ENCODE measurements at regions of chr1 and their contacts with region 1.

Region 1: DNA sequence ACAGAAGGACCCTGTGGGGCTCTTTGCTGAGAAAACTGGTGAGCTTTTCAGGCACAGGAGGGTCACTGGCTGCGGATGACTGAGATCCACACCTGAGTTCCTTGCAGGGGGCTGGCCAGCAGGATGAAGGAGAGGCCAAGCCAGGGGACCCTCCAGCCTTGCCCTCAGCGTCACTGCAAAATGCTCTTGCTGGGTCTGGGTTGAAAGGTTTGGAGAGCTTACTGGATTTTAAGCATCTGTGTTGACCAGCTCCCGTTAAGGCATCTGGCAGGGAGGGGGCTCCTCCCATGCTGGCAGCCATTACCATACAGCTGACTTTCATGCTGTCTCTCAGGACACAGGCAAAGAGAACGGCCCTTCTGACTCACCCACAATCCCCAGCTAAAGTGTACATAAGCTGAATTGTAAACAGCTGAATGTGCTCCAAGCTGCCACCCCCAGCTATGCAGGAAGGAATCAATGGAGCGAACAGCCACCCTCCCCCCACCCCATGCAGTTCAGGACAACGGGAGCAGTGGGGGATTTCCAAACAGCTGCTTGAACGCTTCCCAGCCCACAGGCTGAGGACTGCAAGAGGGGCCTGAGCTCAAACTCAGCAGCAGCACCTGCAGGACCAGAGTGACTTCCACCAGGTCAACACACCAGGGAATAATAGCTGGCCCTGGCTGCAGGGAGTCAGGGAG is 21.3 kb upstream of the A3GALT2 start:
- DNase-seq: peak; percentile 48 to 77
- H3K4me3 ChIP-seq: peak overlapping the region in 3 of 4 experiments; percentile 4 to 33 (median 11); a peak in 4 of 8 replicates
- H3K27ac ChIP-seq: no peak overlapping the region; the same call in 1 of the 2 replicates
- H3K4me1 ChIP-seq: peaks cover 23 to 56% (median 31%) of the 10 kb centered on the region in 4 experiments
- H3K27me3 ChIP-seq: peaks cover 3 to 14% (median 10%) of the 10 kb centered on the region in 4 experiments
- CTCF ChIP-seq: no peak
- EP300 ChIP-seq: peak; percentile 2 to 88; a peak in 2 of 3 replicates
- POLR2A ChIP-seq: no peak; a peak in 1 of 3 replicates
- RAD21 ChIP-seq: peak; percentile 12 to 25; a peak in 1 of 4 replicates

Region 2: DNA sequence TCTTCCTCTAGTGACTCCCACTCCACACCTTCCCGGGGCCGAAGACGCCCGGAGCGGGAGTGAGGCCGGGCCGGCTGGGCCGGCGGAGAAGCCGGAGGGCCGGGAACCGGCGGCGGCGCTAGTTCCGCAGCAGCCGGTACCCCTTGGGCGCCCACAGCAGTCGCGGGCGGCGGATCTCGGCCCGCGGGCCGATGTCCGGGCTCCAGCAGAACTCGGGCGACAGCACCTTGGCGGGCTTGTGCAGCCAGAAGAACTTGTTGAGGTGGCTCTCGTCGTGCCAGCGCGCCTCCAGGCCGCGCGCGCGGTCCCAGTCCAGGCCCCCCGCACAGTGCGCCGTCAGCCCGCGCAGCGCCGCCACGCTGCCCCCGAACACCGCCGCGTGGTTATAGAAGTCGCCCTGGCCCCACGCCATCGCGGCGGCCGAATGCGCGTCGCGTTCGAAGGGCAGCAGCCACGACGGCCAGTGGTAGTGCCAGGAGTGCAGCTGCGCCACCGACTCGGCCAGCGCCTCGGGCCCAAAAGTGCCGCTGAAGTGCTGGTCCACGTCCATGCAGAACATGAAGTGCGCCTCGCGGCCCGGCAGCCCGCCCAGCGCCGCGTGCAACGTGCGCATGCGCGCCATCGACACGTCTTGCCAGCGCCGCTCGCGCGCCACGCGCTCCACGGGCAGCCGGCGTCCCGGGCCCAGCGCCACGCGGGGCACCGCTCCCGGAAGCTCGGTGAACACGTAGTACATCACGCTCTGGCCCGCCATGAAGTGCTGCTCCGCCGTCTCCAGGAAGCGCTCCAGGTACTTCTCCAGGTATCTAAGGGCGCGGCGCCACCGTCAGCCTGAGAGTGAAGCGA is 35.3 kb before region 1 on chr1:
- CTCF ChIA-PET with region 1: interaction called, 12 read pairs
- POLR2A ChIA-PET with region 1: interaction called, 4 read pairs
- DNase-seq: peak in 1 of 2 experiments; percentile 67
- H3K4me3 ChIP-seq: peak overlapping the region; percentile 7 to 55 (median 18); a peak in 6 of 8 replicates
- H3K27ac ChIP-seq: no peak overlapping the region
- H3K4me1 ChIP-seq: peaks cover 0 to 9% (median 3%) of the 10 kb centered on the region in 4 experiments; a peak in 5 of 7 replicates
- H3K27me3 ChIP-seq: peaks cover 11 to 23% (median 21%) of the 10 kb centered on the region in 4 experiments
- CTCF ChIP-seq: no peak
- EP300 ChIP-seq: no peak
- POLR2A ChIP-seq: no peak
- RAD21 ChIP-seq: no peak

Region 3: GRCh38 chr1:33319949-33320605 is 22.1 kb before region 1 on chr1:
- CTCF ChIA-PET with region 1: interaction called, 20 read pairs
- POLR2A ChIA-PET with region 1: interaction called, 3 read pairs
- DNase-seq: no peak
- H3K4me3 ChIP-seq: no peak overlapping the region
- H3K27ac ChIP-seq: no peak overlapping the region
- H3K4me1 ChIP-seq: no peaks in the 10 kb centered on the region
- H3K27me3 ChIP-seq: no peaks in the 10 kb centered on the region
- CTCF ChIP-seq: no peak
- EP300 ChIP-seq: no peak
- POLR2A ChIP-seq: no peak
- RAD21 ChIP-seq: no peak

Region 4: DNA sequence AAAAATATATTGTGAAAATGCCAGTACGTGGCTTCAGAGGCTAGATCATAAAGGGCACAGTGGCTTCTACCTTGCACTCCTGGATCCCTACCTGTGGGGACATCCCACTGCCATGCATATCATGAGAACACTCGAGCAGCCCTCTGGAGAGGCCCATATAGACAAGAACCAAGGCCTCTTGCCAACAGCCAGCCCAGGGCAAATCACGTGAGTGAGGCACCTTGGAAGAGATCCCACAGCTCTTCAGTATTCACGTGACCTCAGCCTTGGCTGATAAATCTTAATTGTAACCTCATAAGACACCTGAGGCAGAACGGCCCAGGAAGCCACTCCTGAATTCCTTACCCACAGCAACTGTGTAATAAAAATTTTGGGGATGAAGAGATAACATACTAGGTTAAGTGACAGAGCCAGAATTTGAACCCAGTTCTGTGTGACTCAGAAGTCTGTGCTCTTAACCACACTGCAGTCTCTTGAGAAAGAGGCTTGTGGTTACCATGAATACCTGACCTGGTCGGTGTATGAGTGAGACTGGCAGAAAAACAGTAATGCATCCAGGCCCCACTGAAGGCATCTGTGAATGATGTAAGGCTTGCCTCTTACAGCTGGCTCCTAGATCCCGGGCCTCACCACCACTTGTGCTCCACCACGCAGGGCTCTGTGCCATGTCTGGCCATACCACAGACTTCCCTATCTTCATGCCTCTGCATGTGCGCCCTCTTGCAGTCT is 14.4 kb before region 1 on chr1:
- CTCF ChIA-PET with region 1: interaction called, 9 read pairs
- POLR2A ChIA-PET with region 1: interaction called, 10 read pairs
- DNase-seq: no peak
- H3K4me3 ChIP-seq: no peak overlapping the region
- H3K27ac ChIP-seq: no peak overlapping the region
- H3K4me1 ChIP-seq: 0 out of 7 replicates have a peak, but pooled peaks cover 0 to 3% (median 0%) of the 10 kb centered on the region in 4 experiments
- H3K27me3 ChIP-seq: no peaks in the 10 kb centered on the region
- CTCF ChIP-seq: no peak
- EP300 ChIP-seq: no peak
- POLR2A ChIP-seq: no peak
- RAD21 ChIP-seq: no peak

Region 5: GRCh38 chr1:33367485-33368405 is 25.6 kb after region 1 on chr1:
- CTCF ChIA-PET with region 1: interaction called, 14 read pairs
- POLR2A ChIA-PET with region 1: interaction called, 5 read pairs
- DNase-seq: peak; percentile 58 to 95
- H3K4me3 ChIP-seq: no peak overlapping the region
- H3K27ac ChIP-seq: no peak overlapping the region
- H3K4me1 ChIP-seq: peaks cover 13 to 29% (median 18%) of the 10 kb centered on the region in 4 experiments
- H3K27me3 ChIP-seq: no peaks in the 10 kb centered on the region; a peak in 2 of 7 replicates
- CTCF ChIP-seq: peak; percentile 94 to 97 (median 97)
- EP300 ChIP-seq: no peak
- POLR2A ChIP-seq: no peak
- RAD21 ChIP-seq: peak; percentile 98 to 99

Measured in H1 (cell line).